Colonic mucosa (tissue), 4 donors: ENCODE measurements at regions of chr9 and their contacts with region 1.

Region 1: DNA sequence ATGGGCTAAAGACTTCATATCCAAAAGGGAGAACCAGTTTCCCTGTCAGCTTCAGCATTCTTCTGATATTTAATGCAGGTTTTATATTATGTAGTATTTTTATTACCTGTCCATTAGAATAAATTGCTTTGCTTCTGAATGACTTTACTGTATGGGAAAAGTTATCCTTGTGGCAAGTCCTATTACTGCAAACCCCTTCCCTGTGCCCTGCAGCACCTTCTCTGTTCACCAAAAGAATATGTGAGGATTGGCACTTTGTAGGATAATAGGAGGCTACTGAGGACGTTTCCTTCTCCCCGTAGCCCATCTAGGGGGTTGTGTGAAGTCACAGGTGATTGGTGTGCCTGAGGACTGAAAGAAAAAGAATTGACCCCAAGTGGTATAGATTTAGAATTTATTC is 296.1 kb downstream of the KDM4C start:
- DNase-seq: no peak
- H3K4me3 ChIP-seq: no peak overlapping the region
- H3K27ac ChIP-seq: no peak overlapping the region
- H3K4me1 ChIP-seq: no peaks in the 10 kb centered on the region
- H3K27me3 ChIP-seq: no peaks in the 10 kb centered on the region
- CTCF ChIP-seq: no peak

Region 2: DNA sequence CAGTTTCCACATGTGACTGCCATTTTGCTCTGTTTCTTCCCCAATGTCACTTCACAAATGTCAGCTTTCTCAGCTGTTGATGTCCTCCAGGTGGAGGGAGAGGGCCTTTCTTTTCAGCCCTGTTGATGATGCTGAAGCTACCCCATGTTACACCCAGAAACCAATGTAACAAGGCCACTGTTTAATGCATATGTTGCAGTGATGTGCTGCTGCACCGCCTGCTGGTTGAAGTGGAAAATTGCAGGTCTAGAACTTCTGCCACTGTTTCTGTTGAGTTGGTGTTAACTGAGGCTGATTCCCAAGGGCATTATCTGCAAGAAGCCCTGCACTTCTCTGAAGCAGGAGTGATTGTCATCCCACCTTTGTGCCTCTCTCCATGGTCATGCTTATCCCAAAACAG is 132.3 kb after region 1 on chr9:
- intact Hi-C with region 1: loop called (anchors 2 kb)
- DNase-seq: peak; percentile 25
- H3K4me3 ChIP-seq: no peak overlapping the region
- H3K27ac ChIP-seq: no peak overlapping the region
- H3K4me1 ChIP-seq: no peaks in the 10 kb centered on the region
- H3K27me3 ChIP-seq: no peaks in the 10 kb centered on the region
- CTCF ChIP-seq: peak; percentile 48

Region 3: GRCh38 chr9:7375013-7375511 is 321.2 kb after region 1 on chr9:
- intact Hi-C with region 1: no loop called
- DNase-seq: no peak
- H3K4me3 ChIP-seq: no peak overlapping the region
- H3K27ac ChIP-seq: no peak overlapping the region
- H3K4me1 ChIP-seq: no peaks in the 10 kb centered on the region
- H3K27me3 ChIP-seq: no peaks in the 10 kb centered on the region
- CTCF ChIP-seq: no peak

Region 4: GRCh38 chr9:7402334-7403027 is 348.6 kb after region 1 on chr9:
- intact Hi-C with region 1: loop called (anchors 5 kb)
- DNase-seq: no peak
- H3K4me3 ChIP-seq: no peak overlapping the region
- H3K27ac ChIP-seq: no peak overlapping the region
- H3K4me1 ChIP-seq: no peaks in the 10 kb centered on the region
- H3K27me3 ChIP-seq: no peaks in the 10 kb centered on the region
- CTCF ChIP-seq: no peak

Region 5: GRCh38 chr9:7542693-7543092 is 488.8 kb after region 1 on chr9:
- intact Hi-C with region 1: loop called (anchors 5 kb)
- DNase-seq: no peak
- H3K4me3 ChIP-seq: no peak overlapping the region
- H3K27ac ChIP-seq: no peak overlapping the region
- H3K4me1 ChIP-seq: no peaks in the 10 kb centered on the region
- H3K27me3 ChIP-seq: no peaks in the 10 kb centered on the region
- CTCF ChIP-seq: no peak